ENCODE measurements at regions of chr10 and their contacts with region 1.

Region 1: GRCh38 chr10:95693668-95694534 is at the start of gene TCTN3:
- DNase-seq: peak; percentile 100
- H3K4me3 Mint-ChIP-seq: peak within 1 kb of the TSS; percentile 99
- H3K27ac Mint-ChIP-seq: peak within 1 kb of the TSS; percentile 98
- H3K4me1 Mint-ChIP-seq: peaks cover 23% of the 10 kb centered on the region
- H3K27me3 Mint-ChIP-seq: no peaks in the 10 kb centered on the region
- CTCF ChIP-seq: peak; percentile 92
- total RNA-seq, gene TCTN3: 32.5 and 37.3 TPM in 2 replicates

Region 2: DNA sequence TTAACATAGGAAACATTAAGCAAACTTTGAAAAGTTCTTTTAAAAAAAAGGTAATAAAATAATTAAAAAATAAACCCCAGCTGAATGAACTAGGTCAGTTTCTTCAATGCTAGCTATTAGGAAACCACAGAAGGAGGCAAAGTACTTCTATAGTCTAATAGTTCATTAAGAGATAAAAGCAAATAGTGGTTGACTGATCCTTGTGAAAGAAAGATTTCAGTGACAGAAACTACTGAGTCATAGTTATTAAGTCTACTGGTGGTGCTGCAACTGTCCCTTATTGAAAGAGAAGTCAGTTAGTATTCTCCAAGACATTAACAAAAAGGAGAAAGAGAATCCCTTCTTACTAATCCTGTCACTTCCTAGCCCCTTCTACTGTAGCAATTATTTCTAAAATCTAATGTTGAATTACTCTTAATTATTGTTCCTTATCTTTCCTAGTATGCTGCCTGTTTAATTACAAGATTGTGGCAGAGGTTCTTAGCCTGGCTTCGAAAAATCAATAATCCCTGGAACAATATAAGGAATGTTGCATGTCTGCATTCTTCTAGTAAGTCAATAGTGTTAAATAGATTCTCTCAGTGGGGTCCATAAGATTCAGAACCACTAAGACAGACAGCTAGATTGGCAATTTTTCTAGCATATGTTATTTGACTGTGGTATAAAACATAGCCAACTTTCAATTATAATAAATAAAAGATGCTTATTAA is 18.3 kb before region 1 on chr10:
- CTCF ChIA-PET with region 1: interaction called, 25 read pairs
- POLR2A ChIA-PET with region 1: interaction called, 6 read pairs
- intact Hi-C with region 1: no loop called
- DNase-seq: no peak
- H3K4me3 Mint-ChIP-seq: no peak overlapping the region
- H3K27ac Mint-ChIP-seq: no peak overlapping the region
- H3K4me1 Mint-ChIP-seq: no peaks in the 10 kb centered on the region
- H3K27me3 Mint-ChIP-seq: no peaks in the 10 kb centered on the region
- CTCF ChIP-seq: no peak

Region 3: GRCh38 chr10:95716466-95717224 is 22.7 kb after region 1 on chr10:
- CTCF ChIA-PET with region 1: interaction called, 12 read pairs
- POLR2A ChIA-PET with region 1: interaction called, 3 read pairs
- intact Hi-C with region 1: no loop called
- DNase-seq: no peak
- H3K4me3 Mint-ChIP-seq: no peak overlapping the region
- H3K27ac Mint-ChIP-seq: no peak overlapping the region
- H3K4me1 Mint-ChIP-seq: no peaks in the 10 kb centered on the region
- H3K27me3 Mint-ChIP-seq: no peaks in the 10 kb centered on the region
- CTCF ChIP-seq: no peak

Region 4: DNA sequence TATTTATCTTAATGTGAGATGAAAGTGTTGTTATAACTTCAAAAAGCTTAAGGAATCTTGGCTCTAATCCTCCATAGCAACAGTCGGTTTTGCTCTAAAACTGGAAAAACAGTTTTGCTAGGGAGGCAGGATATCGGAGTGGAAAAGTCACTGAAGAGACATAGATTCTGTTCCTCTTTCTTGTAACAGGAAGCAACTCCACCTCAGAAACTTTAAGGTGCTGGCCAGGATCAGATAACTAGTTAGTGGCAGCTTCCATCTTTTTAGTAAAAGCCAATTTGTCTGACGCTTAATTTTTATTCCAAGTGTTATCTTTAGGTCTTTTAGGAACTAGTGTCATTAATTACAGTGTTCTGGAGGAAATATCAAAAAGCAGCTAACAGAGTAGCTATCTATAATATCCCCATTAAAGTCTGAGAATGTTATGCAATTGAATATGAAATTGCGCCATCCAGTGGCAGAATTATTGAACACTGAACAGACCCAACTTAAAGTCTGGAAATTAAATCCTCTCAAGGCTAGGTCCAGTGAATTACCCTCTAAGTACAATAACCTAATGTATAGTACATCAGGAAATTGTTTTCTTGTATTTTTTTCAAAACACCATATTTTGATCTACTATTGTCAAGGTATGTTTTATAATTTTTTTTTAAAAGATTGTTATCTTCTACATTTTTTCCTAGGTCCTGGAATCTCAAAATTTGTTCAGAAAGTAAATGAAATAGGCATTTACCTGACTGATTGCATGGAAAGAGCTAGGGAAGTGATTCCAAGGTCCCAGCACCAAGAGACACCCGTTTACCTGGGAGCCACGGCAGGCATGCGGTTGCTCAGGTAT is 148.0 kb after region 1 on chr10:
- CTCF ChIA-PET with region 1: interaction called, 94 read pairs
- POLR2A ChIA-PET with region 1: interaction called, 4 read pairs
- intact Hi-C with region 1: loop called (anchors 1 kb)
- DNase-seq: peak; percentile 77
- H3K4me3 Mint-ChIP-seq: no peak overlapping the region
- H3K27ac Mint-ChIP-seq: no peak overlapping the region
- H3K4me1 Mint-ChIP-seq: no peaks in the 10 kb centered on the region
- H3K27me3 Mint-ChIP-seq: peaks cover 15% of the 10 kb centered on the region
- CTCF ChIP-seq: peak; percentile 46

Region 5: GRCh38 chr10:95907456-95908253 is 213.8 kb after region 1 on chr10 and contains the start of gene CC2D2B:
- CTCF ChIA-PET with region 1: interaction called, 13 read pairs
- POLR2A ChIA-PET with region 1: interaction called, 14 read pairs
- intact Hi-C with region 1: loop called (anchors 1 kb)
- DNase-seq: peak; percentile 81
- H3K4me3 Mint-ChIP-seq: peak within 1 kb of the TSS; percentile 92
- H3K27ac Mint-ChIP-seq: peak within 1 kb of the TSS; percentile 59
- H3K4me1 Mint-ChIP-seq: peaks cover 17% of the 10 kb centered on the region
- H3K27me3 Mint-ChIP-seq: no peaks in the 10 kb centered on the region
- CTCF ChIP-seq: peak; percentile 16
- total RNA-seq, gene CC2D2B: not detected in 2 replicates

Region 6: GRCh38 chr10:96129387-96130325 is 435.8 kb after region 1 on chr10 and contains the start of gene ZNF518A:
- CTCF ChIA-PET with region 1: interaction called, 11 read pairs
- POLR2A ChIA-PET with region 1: interaction called, 4 read pairs
- intact Hi-C with region 1: no loop called
- DNase-seq: peak; percentile 90
- H3K4me3 Mint-ChIP-seq: peak within 1 kb of the TSS; percentile 84
- H3K27ac Mint-ChIP-seq: peak within 1 kb of the TSS; percentile 99
- H3K4me1 Mint-ChIP-seq: peaks cover 10% of the 10 kb centered on the region
- H3K27me3 Mint-ChIP-seq: no peaks in the 10 kb centered on the region
- CTCF ChIP-seq: no peak
- total RNA-seq, gene ZNF518A: 13.3 and 14.7 TPM in 2 replicates

Measured in MCF 10A (cell line).